ENCODE measurements at regions of chr3 and their contacts with region 1.

Region 1: GRCh38 chr3:48847504-48848423 is at the start of gene PRKAR2A:
- DNase-seq: peak; percentile 67 to 94
- H3K4me3 ChIP-seq: peak within 1 kb of the TSS; percentile 60 to 73
- H3K27ac ChIP-seq: peak within 1 kb of the TSS; percentile 91 to 94
- H3K4me1 ChIP-seq: peaks cover 3 to 16% of the 10 kb centered on the region in 2 donors
- H3K27me3 ChIP-seq: no peaks in the 10 kb centered on the region
- CTCF ChIP-seq: no peak
- total RNA-seq, gene PRKAR2A: 148 TPM

Region 2: DNA sequence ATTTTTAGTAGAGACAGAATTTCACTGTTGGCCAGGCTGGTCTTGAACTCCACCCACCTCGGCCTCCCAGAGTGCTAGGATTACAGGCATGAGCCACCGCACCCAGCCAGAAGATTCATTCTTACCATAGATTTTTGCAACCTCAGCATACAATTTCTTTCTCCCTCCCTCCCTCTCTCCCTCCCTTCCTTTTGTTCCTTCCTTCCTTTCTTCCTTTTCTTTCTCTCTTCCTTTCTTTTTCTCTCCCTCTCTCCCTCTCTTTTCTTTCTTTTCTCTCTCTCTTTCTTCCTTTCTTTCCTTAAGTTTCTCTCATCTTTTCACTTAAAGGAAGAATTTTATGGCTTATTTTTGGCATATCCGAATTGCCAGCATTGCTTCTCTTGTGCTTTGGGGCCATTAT is 58.1 kb before region 1 on chr3:
- intact Hi-C with region 1: loop called (anchors 5 kb)
- DNase-seq: no peak
- H3K4me3 ChIP-seq: no peak overlapping the region
- H3K27ac ChIP-seq: no peak overlapping the region
- H3K4me1 ChIP-seq: no peaks in the 10 kb centered on the region
- H3K27me3 ChIP-seq: no peaks in the 10 kb centered on the region
- CTCF ChIP-seq: no peak

Region 3: GRCh38 chr3:48811524-48811923 is 36.2 kb before region 1 on chr3:
- intact Hi-C with region 1: loop called (anchors 5 kb)
- DNase-seq: no peak
- H3K4me3 ChIP-seq: no peak overlapping the region
- H3K27ac ChIP-seq: no peak overlapping the region
- H3K4me1 ChIP-seq: peaks cover 0 to 3% of the 10 kb centered on the region in 2 donors
- H3K27me3 ChIP-seq: no peaks in the 10 kb centered on the region
- CTCF ChIP-seq: no peak

Region 4: DNA sequence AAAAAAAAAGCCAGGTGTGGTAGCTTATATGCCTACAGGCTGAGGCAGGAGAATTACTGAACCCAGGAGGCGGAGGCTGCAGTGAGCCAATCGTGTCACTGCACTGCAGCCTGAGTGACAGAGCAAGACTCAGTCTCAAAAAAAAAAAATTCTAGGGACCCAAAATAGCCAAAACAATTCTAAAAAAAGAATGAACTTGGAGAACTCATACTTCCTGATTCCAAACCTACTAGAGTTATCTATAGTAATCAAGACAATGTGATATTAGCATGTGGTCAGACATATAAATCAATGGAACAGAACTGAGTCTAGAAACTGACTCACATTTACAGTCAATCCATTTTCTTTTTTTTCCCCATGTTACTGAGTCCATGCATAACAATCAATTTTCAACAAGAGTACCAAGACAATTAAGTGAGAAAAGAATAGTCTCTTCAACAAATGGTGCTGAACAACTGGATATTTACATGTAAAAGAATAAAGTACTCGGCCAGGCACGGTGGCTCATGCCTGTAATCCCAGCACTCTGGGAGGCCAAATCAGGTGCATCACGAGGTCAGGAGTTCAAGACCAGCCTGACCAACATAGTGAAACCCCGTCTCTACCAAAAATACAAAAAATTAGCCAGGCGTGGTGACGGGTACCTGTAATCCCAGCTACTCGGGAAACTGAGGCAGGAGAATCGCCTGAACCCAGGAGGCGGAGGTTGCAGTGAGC is 12.0 kb before region 1 on chr3:
- intact Hi-C with region 1: loop called (anchors 1 kb)
- DNase-seq: no peak
- H3K4me3 ChIP-seq: no peak overlapping the region
- H3K27ac ChIP-seq: peak overlapping the region; percentile 63 to 67
- H3K4me1 ChIP-seq: peaks cover 5 to 42% of the 10 kb centered on the region in 2 donors
- H3K27me3 ChIP-seq: no peaks in the 10 kb centered on the region
- CTCF ChIP-seq: no peak

Region 5: DNA sequence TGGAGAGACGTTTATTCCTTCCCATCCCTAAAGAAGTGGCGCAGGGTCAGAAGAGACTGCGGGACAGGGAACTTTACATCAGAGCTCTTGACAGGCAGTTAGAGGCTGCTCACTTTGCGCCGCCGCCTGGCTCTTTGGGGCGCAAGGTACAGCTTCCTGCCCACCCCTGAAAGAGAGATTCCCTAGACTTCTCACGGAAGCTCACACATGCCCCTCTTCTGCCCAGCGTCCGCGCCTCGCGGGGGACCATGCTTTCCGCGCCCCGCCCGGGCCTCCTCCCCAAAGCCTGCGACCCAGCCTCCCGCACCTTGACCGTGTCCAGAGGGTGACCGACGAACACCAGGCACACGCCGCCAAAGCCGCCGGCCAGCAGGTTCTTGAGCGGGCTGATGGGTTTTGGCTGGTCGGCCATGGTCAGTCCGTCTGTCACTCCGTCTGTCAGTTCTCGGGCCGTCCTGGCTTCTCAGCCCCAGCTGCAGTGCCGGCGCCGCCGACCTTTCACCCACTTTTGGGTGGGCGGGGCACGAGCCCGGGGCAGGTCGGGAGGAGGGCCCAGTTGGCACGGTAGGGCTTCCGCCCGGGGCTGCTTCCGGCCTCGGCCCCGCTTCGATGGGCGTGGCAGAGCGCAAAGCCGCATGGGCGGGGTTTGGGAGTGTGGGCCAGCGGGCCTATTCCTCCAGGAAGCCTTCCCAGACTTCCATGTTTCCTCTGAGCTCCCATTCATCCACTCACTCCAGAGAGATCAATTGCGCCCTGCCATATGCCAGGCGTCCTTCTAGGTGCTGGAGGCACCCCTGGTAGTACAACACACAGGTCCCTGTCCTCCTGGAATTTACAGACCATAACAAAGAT is 50.8 kb after region 1 on chr3 and contains the start of gene SLC25A20:
- intact Hi-C with region 1: loop called (anchors 5 kb)
- DNase-seq: peak; percentile 51 to 95
- H3K4me3 ChIP-seq: peak within 1 kb of the TSS; percentile 74 to 80
- H3K27ac ChIP-seq: peak within 1 kb of the TSS; percentile 56 to 86
- H3K4me1 ChIP-seq: peaks cover 5 to 13% of the 10 kb centered on the region in 2 donors
- H3K27me3 ChIP-seq: no peaks in the 10 kb centered on the region
- CTCF ChIP-seq: no peak
- total RNA-seq, gene SLC25A20: 14.4 TPM

Region 6: DNA sequence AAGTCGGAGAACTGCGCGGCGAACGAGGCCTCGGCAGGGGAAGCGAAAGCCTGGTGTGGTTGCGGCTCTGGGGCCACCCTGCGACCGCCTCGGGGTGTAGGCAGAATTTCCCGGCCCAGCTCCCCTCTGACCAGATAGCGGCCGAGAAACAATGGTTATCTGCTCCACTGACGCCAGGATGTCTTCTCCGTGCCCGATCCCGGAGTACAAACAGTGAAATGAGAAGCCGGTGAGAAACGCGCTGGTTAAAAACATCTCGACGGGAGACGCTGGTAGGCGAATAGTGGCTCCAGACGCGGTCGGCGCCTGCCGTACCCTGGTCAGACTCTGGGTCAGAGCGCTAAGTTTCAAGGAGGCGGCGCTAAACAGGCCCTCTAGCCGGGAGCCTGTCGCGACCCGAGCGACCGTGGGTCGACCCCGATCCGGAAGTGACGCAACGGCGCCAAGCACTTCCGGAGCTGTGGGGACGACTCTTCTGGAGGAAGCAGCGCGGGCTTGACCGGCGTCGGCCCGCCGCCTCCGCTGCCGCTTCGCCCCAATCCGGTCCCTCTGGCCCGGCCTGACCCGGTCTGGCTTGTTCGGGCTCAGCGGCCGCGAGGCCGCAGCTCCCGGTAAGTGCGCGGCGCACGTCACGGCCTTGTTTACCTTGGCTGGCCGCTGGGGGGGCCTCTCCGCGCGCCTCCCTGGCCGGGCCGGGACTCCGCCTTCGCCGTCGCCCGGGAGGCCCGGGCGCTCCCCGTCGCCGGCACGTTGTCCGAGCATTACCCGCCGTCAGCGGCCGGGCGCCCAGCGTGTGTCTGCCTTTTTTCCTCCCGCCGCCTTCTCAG is 70.8 kb after region 1 on chr3 and contains the start of gene ARIH2:
- intact Hi-C with region 1: loop called (anchors 2 kb)
- DNase-seq: peak; percentile 62 to 96
- H3K4me3 ChIP-seq: peak within 1 kb of the TSS; percentile 72 to 88
- H3K27ac ChIP-seq: peak within 1 kb of the TSS; percentile 95 to 98
- H3K4me1 ChIP-seq: peaks cover 0 to 9% of the 10 kb centered on the region in 2 donors
- H3K27me3 ChIP-seq: no peaks in the 10 kb centered on the region
- CTCF ChIP-seq: no peak
- total RNA-seq, gene ARIH2: 82.3 TPM

Measured in ascending aorta (tissue), 2 donors.